A673 (cell line): ENCODE measurements at regions of chrX and their contacts with region 1.

Region 1: DNA sequence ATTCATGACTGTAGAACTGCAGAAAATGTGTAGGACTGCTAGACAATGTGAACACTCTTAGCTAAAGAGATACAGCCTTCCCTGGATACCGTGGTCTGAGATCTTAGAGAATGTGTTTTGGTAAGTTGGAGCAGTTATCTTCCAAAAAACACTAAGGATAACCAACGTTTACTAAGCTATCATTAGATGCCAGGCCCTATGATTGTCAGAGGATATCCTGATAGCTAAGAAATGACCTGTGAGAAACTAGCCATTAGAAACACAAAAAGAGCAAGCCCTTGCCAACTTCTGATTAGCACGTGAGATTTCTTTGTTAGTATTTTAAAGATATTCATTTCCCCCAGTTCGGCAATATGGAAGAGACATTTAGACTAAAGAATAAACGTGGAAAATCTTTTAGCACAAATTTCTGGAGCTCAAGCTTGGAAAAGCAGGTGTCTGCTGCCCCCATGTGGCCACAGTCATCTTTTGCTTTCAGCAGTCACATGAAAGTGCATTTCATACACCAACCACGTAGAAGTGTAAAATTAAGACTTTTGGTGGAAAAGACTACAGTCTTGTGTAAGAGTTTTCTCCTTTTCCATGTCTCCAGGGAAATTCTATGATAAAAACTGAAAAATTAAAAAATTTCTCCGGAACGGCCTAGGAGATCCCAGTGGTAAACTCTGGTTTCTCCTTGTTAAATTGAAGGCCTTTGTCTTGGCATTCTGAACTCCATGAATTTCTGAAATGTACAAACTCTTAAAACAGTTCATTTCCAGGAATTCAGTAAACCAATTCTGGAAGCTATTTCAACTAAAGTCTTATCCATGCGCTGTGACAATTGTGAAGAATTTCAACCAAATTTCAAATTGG is 136.4 kb downstream of the ZNF674 start:
- DNase-seq: peak; percentile 84
- H3K4me3 ChIP-seq: no peak overlapping the region
- H3K27ac ChIP-seq: peak overlapping the region; percentile 79
- H3K4me1 ChIP-seq: peaks cover 19% of the 10 kb centered on the region
- H3K27me3 ChIP-seq: no peaks in the 10 kb centered on the region
- CTCF ChIP-seq: peak; percentile 94

Region 2: DNA sequence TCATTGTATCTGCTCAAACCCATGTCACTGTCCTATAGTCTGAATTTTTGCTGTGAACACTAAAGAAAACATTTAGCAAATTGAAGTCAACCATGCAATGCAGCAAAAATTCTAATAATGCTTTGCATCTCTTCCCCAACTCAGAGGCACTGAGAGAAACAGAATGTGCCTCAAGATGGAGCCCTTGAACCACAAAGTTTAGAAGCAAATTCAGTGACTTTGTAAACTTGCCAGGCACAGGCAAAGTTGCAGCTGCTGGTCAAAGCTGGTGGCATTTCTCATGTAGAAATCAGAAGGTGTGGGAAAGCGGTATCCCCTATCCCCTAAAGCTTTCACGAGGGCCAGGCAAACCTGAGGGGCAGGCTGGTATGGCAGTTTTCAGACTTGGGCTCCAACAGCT is 1086.4 kb before region 1 on chrX:
- CTCF ChIA-PET with region 1: no interaction called
- POLR2A ChIA-PET with region 1: no interaction called
- intact Hi-C with region 1: loop called (anchors 2 kb)
- DNase-seq: peak; percentile 74
- H3K4me3 ChIP-seq: no peak overlapping the region
- H3K27ac ChIP-seq: no peak overlapping the region
- H3K4me1 ChIP-seq: peaks cover 4% of the 10 kb centered on the region
- H3K27me3 ChIP-seq: no peaks in the 10 kb centered on the region
- CTCF ChIP-seq: peak; percentile 60

Region 3: GRCh38 chrX:45515262-45516215 is 893.2 kb before region 1 on chrX:
- CTCF ChIA-PET with region 1: interaction called, 8 read pairs
- POLR2A ChIA-PET with region 1: no interaction called
- intact Hi-C with region 1: loop called (anchors 2 kb)
- DNase-seq: peak; percentile 72
- H3K4me3 ChIP-seq: no peak overlapping the region
- H3K27ac ChIP-seq: peak overlapping the region; percentile 4
- H3K4me1 ChIP-seq: peaks cover 21% of the 10 kb centered on the region
- H3K27me3 ChIP-seq: no peaks in the 10 kb centered on the region
- CTCF ChIP-seq: peak; percentile 80

Region 4: DNA sequence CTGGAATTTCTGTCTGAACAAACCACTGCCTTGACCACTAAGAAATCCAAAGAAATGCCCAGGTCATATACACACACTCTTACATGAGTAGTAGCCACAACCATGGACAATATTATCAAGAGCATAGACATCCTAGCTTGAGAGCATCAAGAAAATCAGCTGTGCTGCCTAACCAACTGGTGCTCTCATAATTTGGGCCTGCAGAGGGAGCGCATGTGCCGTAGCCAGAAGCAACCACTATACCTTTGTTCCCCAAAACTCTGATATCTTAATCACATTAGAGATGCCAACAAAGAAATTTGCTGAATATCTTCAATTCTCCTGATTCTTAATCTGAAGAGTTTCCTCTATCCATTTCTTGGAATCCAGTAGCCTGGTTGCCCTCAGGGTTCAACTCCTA is 27.1 kb before region 1 on chrX:
- CTCF ChIA-PET with region 1: interaction called, 7 read pairs
- POLR2A ChIA-PET with region 1: no interaction called
- intact Hi-C with region 1: loop called (anchors 1 kb)
- DNase-seq: peak; percentile 75
- H3K4me3 ChIP-seq: no peak overlapping the region
- H3K27ac ChIP-seq: no peak overlapping the region
- H3K4me1 ChIP-seq: peaks cover 7% of the 10 kb centered on the region
- H3K27me3 ChIP-seq: no peaks in the 10 kb centered on the region
- CTCF ChIP-seq: peak; percentile 83